CD8-positive, alpha-beta T cell (primary cell): ENCODE measurements at regions of chr6 and their contacts with region 1.

Region 1: DNA sequence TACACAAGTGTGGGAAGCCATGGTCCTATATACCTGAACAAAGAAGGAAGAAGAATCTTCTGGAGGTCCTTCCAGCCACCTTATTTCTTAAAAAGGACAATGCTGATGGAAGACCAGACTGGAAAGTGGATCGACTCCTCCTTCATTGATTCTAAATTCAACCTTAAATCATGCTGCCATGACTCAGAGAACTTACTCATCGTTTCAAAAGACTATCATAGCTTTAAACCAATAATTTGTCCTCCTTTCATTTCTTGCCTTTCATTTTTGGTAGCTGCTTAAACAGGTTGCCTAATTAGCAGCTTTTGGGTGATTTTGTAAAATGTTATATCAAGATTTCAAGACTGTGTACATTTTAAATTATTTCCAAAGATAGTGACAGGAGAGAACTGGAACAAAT is 60.8 kb downstream of the RTN4IP1 start:
- DNase-seq: no peak
- ATAC-seq: no peak
- H3K4me3 ChIP-seq: no peak overlapping the region
- H3K4me3 Mint-ChIP-seq: no peak overlapping the region
- H3K27ac ChIP-seq: no peak overlapping the region
- H3K27ac Mint-ChIP-seq: no peak overlapping the region
- H3K4me1 ChIP-seq: no peaks in the 10 kb centered on the region
- H3K4me1 Mint-ChIP-seq: peaks cover 3% of the 10 kb centered on the region
- H3K27me3 ChIP-seq: no peaks in the 10 kb centered on the region
- H3K27me3 Mint-ChIP-seq: no peaks in the 10 kb centered on the region
- CTCF ChIP-seq: no peak

Region 2: DNA sequence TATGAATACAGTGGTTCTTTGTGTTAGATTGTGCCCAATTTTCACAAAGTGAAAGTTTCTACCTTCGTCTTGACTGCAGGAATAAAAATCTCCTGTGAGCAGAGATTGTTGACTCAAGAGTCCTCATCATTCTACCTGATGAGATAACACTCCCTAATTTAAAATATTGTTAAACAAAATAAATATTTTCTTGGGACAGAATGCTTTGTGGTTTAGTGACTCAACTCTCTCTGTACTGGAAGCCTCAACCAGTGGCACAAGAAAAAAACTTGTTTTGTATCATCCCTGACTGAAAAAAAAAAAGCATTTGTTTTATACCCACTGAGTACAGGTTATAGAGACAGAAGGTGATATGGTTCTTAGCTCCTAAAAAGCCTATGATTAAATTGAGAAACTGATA is 129.1 kb before region 1 on chr6:
- CTCF ChIA-PET with region 1: interaction called, 278 read pairs
- POLR2A ChIA-PET with region 1: interaction called, 3 read pairs
- intact Hi-C with region 1: no loop called
- DNase-seq: no peak
- ATAC-seq: no peak
- H3K4me3 ChIP-seq: no peak overlapping the region
- H3K4me3 Mint-ChIP-seq: no peak overlapping the region
- H3K27ac ChIP-seq: no peak overlapping the region
- H3K27ac Mint-ChIP-seq: no peak overlapping the region
- H3K4me1 ChIP-seq: no peaks in the 10 kb centered on the region
- H3K4me1 Mint-ChIP-seq: no peaks in the 10 kb centered on the region
- H3K27me3 ChIP-seq: peaks cover 0 to 3% of the 10 kb centered on the region in 2 experiments
- H3K27me3 Mint-ChIP-seq: peaks cover 24% of the 10 kb centered on the region
- CTCF ChIP-seq: no peak

Region 3: DNA sequence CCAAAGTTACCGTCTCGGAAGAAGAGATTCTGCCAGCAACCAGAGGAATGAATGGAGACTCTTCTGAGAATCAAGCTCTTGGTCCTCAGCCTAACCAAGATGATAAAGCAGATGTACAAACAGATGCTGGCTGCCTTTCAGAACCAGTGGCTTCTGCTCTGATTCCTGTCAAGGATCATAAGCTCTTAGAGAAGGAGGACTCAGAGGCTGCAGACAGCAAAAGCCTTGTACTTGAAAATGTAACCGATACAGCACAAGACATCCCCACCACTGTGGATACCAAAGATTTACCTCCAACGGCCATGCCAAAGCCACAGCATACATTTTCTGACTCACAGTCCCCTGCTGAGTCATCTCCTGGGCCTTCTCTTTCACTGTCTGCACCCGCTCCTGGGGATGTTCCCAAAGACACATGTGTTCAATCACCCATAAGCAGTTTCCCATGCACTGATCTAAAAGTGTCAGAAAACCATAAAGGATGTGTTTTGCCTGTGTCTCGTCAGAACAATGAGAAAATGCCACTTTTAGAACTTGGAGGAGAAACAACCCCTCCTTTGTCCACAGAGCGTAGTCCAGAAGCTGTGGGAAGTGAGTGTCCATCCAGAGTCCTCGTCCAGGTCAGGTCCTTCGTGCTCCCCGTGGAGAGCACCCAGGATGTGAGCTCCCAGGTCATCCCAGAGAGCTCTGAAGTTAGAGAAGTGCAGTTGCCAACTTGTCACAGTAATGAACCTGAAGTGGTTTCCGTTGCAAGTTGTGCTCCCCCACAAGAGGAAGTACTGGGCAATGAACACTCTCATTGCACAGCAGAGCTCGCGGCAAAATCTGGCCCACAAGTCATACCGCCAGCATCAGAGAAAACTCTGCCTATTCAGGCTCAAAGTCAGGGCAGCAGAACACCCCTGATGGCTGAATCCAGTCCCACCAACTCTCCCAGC is 48.8 kb before region 1 on chr6:
- CTCF ChIA-PET with region 1: interaction called, 109 read pairs
- POLR2A ChIA-PET with region 1: interaction called, 4 read pairs
- intact Hi-C with region 1: no loop called
- DNase-seq: peak; percentile 41 to 93 (median 77)
- ATAC-seq: peak; percentile 50
- H3K4me3 ChIP-seq: peak overlapping the region; percentile 48 to 51
- H3K4me3 Mint-ChIP-seq: peak overlapping the region; percentile 91
- H3K27ac ChIP-seq: peak overlapping the region; percentile 79 to 82
- H3K27ac Mint-ChIP-seq: peak overlapping the region; percentile 96
- H3K4me1 ChIP-seq: peaks cover 48% of the 10 kb centered on the region
- H3K4me1 Mint-ChIP-seq: peaks cover 76% of the 10 kb centered on the region
- H3K27me3 ChIP-seq: no peaks in the 10 kb centered on the region
- H3K27me3 Mint-ChIP-seq: no peaks in the 10 kb centered on the region
- CTCF ChIP-seq: no peak

Region 4: GRCh38 chr6:106997390-106998158 is 429.0 kb after region 1 on chr6:
- CTCF ChIA-PET with region 1: interaction called, 5 read pairs
- POLR2A ChIA-PET with region 1: no interaction called
- intact Hi-C with region 1: loop called in 1 of 2 experiments (anchors 5 kb)
- DNase-seq: peak in 8 of 9 experiments; percentile 11 to 59 (median 40)
- ATAC-seq: peak; percentile 55
- H3K4me3 ChIP-seq: no peak overlapping the region
- H3K4me3 Mint-ChIP-seq: no peak overlapping the region
- H3K27ac ChIP-seq: no peak overlapping the region
- H3K27ac Mint-ChIP-seq: no peak overlapping the region
- H3K4me1 ChIP-seq: no peaks in the 10 kb centered on the region
- H3K4me1 Mint-ChIP-seq: peaks cover 5% of the 10 kb centered on the region
- H3K27me3 ChIP-seq: no peaks in the 10 kb centered on the region
- H3K27me3 Mint-ChIP-seq: no peaks in the 10 kb centered on the region
- CTCF ChIP-seq: peak; percentile 56